ENCODE measurements at regions of chr17 and their contacts with region 1.

Region 1: GRCh38 chr17:75749545-75750389 is 15.2 kb downstream of the GALK1 start:
- DNase-seq: peak; percentile 91 to 97
- ATAC-seq: peak; percentile 82
- H3K4me3 ChIP-seq: no peak overlapping the region
- H3K27ac ChIP-seq: no peak overlapping the region
- H3K4me1 ChIP-seq: no peaks in the 10 kb centered on the region
- H3K27me3 ChIP-seq: no peaks in the 10 kb centered on the region

Region 2: GRCh38 chr17:75430159-75430974 is 319.4 kb before region 1 on chr17:
- intact Hi-C with region 1: loop called in 1 of 2 experiments (anchors 5 kb)
- DNase-seq: peak; percentile 56 to 81
- ATAC-seq: peak; percentile 17
- H3K4me3 ChIP-seq: no peak overlapping the region
- H3K27ac ChIP-seq: peak overlapping the region; percentile 73 to 76
- H3K4me1 ChIP-seq: peaks cover 2 to 3% of the 10 kb centered on the region in 2 donors
- H3K27me3 ChIP-seq: no peaks in the 10 kb centered on the region

Region 3: GRCh38 chr17:75632863-75633485 is 116.8 kb before region 1 on chr17 and contains the start of gene SMIM5:
- intact Hi-C with region 1: loop called (anchors 2 kb)
- DNase-seq: peak; percentile 93 to 97
- ATAC-seq: peak; percentile 88
- H3K4me3 ChIP-seq: no peak within 1 kb of the TSS
- H3K27ac ChIP-seq: peak within 1 kb of the TSS in 1 of 2 donors; percentile 7
- H3K4me1 ChIP-seq: no peaks in the 10 kb centered on the region
- H3K27me3 ChIP-seq: no peaks in the 10 kb centered on the region
- total RNA-seq, gene SMIM5: 0.23 to 1.2 TPM

Region 4: DNA sequence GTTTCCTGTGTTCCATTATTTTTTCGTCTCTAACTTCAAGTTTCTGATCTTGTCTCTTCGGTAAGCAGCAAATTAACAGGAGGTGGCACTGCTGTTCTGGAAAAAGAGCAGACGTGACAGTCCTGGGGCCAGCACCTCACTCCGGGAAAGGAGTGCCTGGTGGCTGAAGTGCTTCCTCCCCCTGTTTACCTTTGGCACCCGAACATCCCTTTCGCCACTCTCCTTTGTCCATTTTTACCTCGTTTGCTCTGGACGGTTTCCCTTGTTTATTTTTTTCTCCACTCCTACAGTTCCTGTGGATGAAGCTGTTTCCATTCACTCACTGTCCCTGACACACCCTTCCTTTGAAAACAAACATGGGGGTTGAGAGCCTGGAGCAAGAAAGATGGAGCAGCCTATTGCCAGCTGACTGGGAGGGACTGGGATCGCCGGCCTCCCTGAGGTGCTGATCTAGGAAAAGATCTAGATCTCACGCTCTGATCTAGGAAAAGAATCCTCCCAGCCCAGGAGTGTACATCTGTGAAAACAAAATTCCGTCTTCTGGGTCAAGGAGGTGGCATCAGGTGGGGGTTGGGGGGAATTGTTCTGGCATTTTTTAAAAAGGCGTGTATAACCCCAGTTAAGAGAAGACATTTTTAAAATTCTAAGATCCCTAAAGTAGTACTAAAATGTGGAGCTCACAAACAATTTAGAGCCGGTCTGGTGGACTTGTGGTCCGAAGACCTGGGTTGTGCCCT is 69.9 kb before region 1 on chr17:
- intact Hi-C with region 1: loop called (anchors 2 kb)
- DNase-seq: peak in 1 of 2 donors; percentile 65
- ATAC-seq: peak; percentile 68
- H3K4me3 ChIP-seq: no peak overlapping the region
- H3K27ac ChIP-seq: no peak overlapping the region
- H3K4me1 ChIP-seq: no peaks in the 10 kb centered on the region
- H3K27me3 ChIP-seq: no peaks in the 10 kb centered on the region

Region 5: GRCh38 chr17:75697651-75698291 is 52.0 kb before region 1 on chr17:
- intact Hi-C with region 1: loop called in 1 of 2 experiments (anchors 5 kb)
- DNase-seq: no peak
- ATAC-seq: no peak
- H3K4me3 ChIP-seq: no peak overlapping the region
- H3K27ac ChIP-seq: no peak overlapping the region
- H3K4me1 ChIP-seq: no peaks in the 10 kb centered on the region
- H3K27me3 ChIP-seq: no peaks in the 10 kb centered on the region

Region 6: DNA sequence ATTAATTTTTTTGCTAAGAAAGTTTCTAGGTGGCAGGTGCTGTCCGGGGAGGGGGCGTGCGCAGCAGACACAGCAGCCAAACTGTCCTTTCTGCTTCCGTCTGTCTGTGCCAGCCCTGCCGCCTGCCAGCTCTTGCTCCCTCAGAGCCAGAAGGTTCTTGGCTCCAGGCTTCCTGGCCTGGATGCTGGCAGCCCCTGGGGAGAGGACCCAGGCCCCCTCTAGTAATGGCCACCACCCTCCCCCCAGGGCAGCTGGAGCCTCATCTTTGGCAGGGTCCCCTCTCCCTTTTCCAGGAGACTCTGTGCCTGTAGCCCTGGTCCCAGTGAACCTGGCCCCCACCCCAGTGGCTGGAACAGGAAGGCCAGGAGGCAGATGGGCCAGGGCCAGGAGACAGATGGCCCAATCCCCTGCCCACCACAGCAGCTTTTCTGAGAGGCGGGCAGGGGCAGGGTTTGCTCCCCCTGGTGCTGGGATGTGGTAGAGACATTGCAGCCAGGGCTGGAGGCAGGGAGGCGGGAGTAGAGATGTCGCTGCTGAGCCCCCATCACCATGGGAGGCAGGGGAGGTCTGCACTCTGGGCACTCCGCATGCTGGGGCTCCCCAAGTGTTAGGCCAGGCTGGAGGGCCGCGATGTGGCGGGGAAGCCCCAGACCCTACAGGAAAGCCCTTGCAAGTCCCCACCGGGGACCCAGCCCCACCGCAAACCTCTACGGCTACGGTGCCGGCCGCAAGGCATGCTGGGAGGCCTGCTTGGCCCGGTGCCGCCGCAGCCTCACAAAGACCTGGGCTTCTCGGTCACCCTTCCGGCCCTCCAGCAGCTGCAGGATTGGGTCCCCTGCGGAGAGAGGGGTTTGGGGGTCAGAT is 77.7 kb after region 1 on chr17:
- intact Hi-C with region 1: loop called in 1 of 2 experiments (anchors 5 kb)
- DNase-seq: peak; percentile 75 to 88
- ATAC-seq: peak; percentile 71
- H3K4me3 ChIP-seq: no peak overlapping the region
- H3K27ac ChIP-seq: peak overlapping the region in 1 of 2 donors; percentile 61
- H3K4me1 ChIP-seq: no peaks in the 10 kb centered on the region
- H3K27me3 ChIP-seq: no peaks in the 10 kb centered on the region

Region 7: GRCh38 chr17:75845049-75845860 is 95.5 kb after region 1 on chr17:
- intact Hi-C with region 1: no loop called
- DNase-seq: peak; percentile 92 to 95
- ATAC-seq: peak; percentile 78
- H3K4me3 ChIP-seq: no peak overlapping the region
- H3K27ac ChIP-seq: peak overlapping the region; percentile 10 to 49
- H3K4me1 ChIP-seq: no peaks in the 10 kb centered on the region
- H3K27me3 ChIP-seq: no peaks in the 10 kb centered on the region

Region 8: GRCh38 chr17:75877752-75878173 is 128.0 kb after region 1 on chr17:
- intact Hi-C with region 1: no loop called
- DNase-seq: peak; percentile 84 to 92
- ATAC-seq: peak; percentile 64
- H3K4me3 ChIP-seq: peak overlapping the region; percentile 4 to 88
- H3K27ac ChIP-seq: peak overlapping the region; percentile 59 to 79
- H3K4me1 ChIP-seq: peaks cover 0 to 3% of the 10 kb centered on the region in 2 donors
- H3K27me3 ChIP-seq: no peaks in the 10 kb centered on the region